WTC11 (cell line): ENCODE measurements at regions of chr6 and their contacts with region 1.

Region 1: GRCh38 chr6:33700391-33701050 is 11.0 kb downstream of the UQCC2 start:
- DNase-seq: peak; percentile 86
- ATAC-seq: peak; percentile 93
- H3K4me3 Mint-ChIP-seq: no peak overlapping the region
- H3K27ac Mint-ChIP-seq: no peak overlapping the region
- H3K4me1 Mint-ChIP-seq: peaks cover 24% of the 10 kb centered on the region
- H3K27me3 Mint-ChIP-seq: no peaks in the 10 kb centered on the region
- CTCF ChIP-seq: peak; percentile 66

Region 2: DNA sequence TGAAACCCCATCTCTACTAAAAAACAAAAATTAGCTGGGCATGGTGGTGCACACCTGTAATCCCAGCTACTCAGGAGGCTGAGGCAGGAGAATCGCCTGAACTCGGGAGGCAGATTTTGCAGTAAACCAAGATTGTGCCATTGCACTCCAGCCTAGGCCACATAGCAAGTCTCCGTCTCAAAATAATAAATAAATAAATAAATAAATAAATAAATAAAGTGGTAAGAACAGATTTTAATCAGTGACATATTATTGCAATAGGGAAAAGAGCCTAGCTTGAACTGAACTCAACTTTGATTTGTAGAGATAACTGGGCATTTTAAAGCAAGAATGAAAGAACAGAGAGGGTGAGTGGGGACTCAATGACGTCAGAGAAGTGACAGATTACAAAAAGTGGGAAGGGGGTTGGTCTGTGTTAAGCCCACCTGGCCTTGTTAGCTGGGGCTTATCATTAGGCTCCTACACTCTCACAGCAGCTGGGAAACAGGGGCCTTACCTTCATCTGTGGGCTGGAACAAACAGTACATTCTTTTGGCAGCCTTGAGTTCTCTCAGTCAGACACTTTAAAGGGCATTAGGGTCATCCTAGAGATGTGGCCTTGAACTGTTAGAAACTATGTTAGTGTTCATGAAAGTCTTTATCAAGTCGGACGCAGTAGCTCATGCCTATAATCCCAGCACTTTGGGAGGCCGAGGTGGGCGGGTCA is 333.4 kb before region 1 on chr6:
- CTCF ChIA-PET with region 1: no interaction called
- POLR2A ChIA-PET with region 1: no interaction called
- DNase-seq: no peak
- ATAC-seq: no peak
- H3K4me3 Mint-ChIP-seq: no peak overlapping the region
- H3K27ac Mint-ChIP-seq: peak overlapping the region; percentile 48
- H3K4me1 Mint-ChIP-seq: peaks cover 14% of the 10 kb centered on the region
- H3K27me3 Mint-ChIP-seq: no peaks in the 10 kb centered on the region
- CTCF ChIP-seq: no peak

Region 3: GRCh38 chr6:33579828-33580714 is 120.5 kb before region 1 on chr6 and contains the start of gene BAK1:
- CTCF ChIA-PET with region 1: interaction called, 18 read pairs
- POLR2A ChIA-PET with region 1: no interaction called
- DNase-seq: peak; percentile 91
- ATAC-seq: peak; percentile 96
- H3K4me3 Mint-ChIP-seq: peak within 1 kb of the TSS; percentile 77
- H3K27ac Mint-ChIP-seq: no peak within 1 kb of the TSS
- H3K4me1 Mint-ChIP-seq: peaks cover 14% of the 10 kb centered on the region
- H3K27me3 Mint-ChIP-seq: no peaks in the 10 kb centered on the region
- CTCF ChIP-seq: no peak
- total RNA-seq, gene BAK1: 40.5 to 40.9 TPM (median 40.5 TPM) in 3 replicates

Region 4: DNA sequence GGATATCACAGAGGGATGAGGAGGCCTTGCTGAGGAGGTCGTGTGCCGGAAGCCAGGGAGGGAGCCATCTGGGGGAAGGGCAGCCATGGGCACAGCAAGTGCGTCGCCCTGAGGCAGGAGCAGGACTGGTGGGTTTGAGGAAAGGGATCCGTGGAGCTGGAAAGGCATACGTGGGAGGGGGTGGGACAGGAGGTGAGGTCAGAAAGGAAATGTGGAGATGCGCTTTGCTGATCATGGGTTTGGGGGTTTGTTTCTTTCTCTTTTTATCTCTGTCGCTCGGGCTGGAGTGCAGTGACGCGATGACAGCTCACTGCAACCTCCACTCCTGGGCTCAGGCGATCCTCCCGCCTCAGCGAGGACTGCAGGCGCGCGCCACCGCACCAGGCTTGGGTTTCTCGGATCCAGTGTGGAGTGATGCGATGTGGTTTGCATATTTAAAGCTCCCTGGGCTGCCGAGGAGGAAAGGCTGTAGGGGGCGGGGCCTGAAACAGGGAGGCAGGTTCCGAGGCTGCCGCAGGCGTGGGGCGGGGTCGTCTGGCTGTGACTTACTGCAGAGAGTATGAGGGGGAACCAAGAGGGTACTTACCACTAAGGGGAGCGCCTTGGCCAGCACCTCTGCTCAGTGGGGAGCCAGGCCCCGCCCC is 108.0 kb before region 1 on chr6:
- CTCF ChIA-PET with region 1: interaction called, 38 read pairs
- POLR2A ChIA-PET with region 1: no interaction called
- DNase-seq: peak; percentile 84
- ATAC-seq: peak; percentile 75
- H3K4me3 Mint-ChIP-seq: peak overlapping the region; percentile 60
- H3K27ac Mint-ChIP-seq: peak overlapping the region; percentile 93
- H3K4me1 Mint-ChIP-seq: peaks cover 35% of the 10 kb centered on the region
- H3K27me3 Mint-ChIP-seq: no peaks in the 10 kb centered on the region; the same call in none of the 2 replicates
- CTCF ChIP-seq: no peak

Region 5: DNA sequence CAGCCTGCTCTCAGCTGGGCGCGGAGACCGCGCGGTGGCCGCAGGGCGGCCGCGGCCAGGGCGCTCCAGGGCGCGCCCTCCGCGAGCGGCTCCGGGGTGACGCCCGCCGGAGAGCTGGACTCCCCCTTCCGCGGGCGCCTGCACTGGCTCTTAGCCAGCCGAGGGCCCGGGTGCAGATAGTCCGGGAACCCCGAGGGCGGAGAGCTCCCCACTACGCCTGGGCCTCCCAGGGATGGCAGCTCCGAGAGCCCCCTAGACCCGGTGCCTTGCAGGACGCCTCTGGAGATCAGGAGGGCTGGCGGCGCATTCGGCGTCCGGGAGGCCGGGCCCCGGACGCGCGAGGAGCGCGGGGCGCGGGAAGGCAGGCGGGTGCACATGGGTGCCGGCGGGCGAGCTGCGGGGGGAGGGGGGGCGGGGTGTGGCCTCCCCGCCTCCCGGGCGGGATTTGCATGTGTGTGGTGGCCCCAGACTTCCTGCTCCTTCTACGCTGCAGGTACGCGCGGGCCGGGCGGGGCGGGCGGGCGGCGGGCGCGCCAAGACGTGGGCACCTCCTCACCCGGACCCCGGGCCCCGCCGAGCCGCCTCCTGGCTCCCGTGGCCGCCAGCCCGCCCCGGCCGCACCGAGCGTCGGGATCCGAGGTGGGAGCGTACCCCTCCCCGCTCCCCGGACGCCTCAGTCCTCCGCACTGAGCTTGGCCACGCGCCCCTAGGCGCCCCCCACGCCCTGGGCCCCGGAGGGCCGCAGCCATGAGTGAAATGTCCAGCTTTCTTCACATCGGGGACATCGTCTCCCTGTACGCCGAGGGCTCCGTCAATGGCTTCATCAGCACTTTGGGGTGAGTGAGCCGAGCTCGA is 79.4 kb before region 1 on chr6 and contains the start of gene ITPR3:
- CTCF ChIA-PET with region 1: interaction called, 14 read pairs
- POLR2A ChIA-PET with region 1: no interaction called
- DNase-seq: no peak
- ATAC-seq: peak; percentile 47
- H3K4me3 Mint-ChIP-seq: peak within 1 kb of the TSS; percentile 91
- H3K27ac Mint-ChIP-seq: no peak within 1 kb of the TSS; the same call in 1 of the 2 replicates
- H3K4me1 Mint-ChIP-seq: peaks cover 46% of the 10 kb centered on the region
- H3K27me3 Mint-ChIP-seq: peaks cover 15% of the 10 kb centered on the region
- CTCF ChIP-seq: no peak
- total RNA-seq, gene ITPR3: 42.5 to 47.3 TPM (median 42.9 TPM) in 3 replicates

Region 6: GRCh38 chr6:33672808-33673207 is 27.7 kb before region 1 on chr6:
- CTCF ChIA-PET with region 1: interaction called, 10 read pairs
- POLR2A ChIA-PET with region 1: no interaction called
- DNase-seq: peak; percentile 35
- ATAC-seq: peak; percentile 60
- H3K4me3 Mint-ChIP-seq: no peak overlapping the region
- H3K27ac Mint-ChIP-seq: no peak overlapping the region
- H3K4me1 Mint-ChIP-seq: no peaks in the 10 kb centered on the region
- H3K27me3 Mint-ChIP-seq: no peaks in the 10 kb centered on the region
- CTCF ChIP-seq: no peak

Region 7: DNA sequence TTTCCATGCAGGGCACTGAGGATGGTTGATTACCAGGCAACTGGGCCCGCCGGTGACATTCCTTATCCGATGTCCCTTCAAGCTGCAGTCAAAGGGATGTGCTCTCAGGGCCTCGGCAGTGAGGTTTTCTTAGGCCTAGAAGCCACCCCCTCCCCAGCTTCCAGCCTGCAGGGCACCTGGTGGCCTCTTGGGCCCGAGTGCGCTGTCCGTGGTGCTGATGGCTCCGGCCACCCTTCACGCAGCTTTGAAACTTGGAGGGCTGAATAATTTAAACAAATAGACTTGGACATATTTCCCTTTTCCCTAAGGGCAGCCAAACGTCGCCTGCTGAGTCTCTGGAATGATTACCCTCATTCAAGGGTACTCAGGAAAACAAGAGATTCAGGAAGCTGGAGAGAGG is 112.1 kb after region 1 on chr6:
- CTCF ChIA-PET with region 1: no interaction called
- POLR2A ChIA-PET with region 1: no interaction called
- DNase-seq: peak; percentile 88
- ATAC-seq: peak; percentile 56
- H3K4me3 Mint-ChIP-seq: peak overlapping the region; percentile 21
- H3K27ac Mint-ChIP-seq: no peak overlapping the region
- H3K4me1 Mint-ChIP-seq: peaks cover 65% of the 10 kb centered on the region
- H3K27me3 Mint-ChIP-seq: peaks cover 12% of the 10 kb centered on the region
- CTCF ChIP-seq: no peak

Region 8: GRCh38 chr6:35173427-35174087 is 1473.0 kb after region 1 on chr6:
- CTCF ChIA-PET with region 1: no interaction called
- POLR2A ChIA-PET with region 1: no interaction called
- DNase-seq: no peak
- ATAC-seq: peak; percentile 32
- H3K4me3 Mint-ChIP-seq: no peak overlapping the region
- H3K27ac Mint-ChIP-seq: no peak overlapping the region
- H3K4me1 Mint-ChIP-seq: peaks cover 4% of the 10 kb centered on the region
- H3K27me3 Mint-ChIP-seq: peaks cover 3% of the 10 kb centered on the region; the same call in 1 of the 2 replicates
- CTCF ChIP-seq: no peak